ENCODE measurements at regions of chr13 and their contacts with region 1.

Region 1: DNA sequence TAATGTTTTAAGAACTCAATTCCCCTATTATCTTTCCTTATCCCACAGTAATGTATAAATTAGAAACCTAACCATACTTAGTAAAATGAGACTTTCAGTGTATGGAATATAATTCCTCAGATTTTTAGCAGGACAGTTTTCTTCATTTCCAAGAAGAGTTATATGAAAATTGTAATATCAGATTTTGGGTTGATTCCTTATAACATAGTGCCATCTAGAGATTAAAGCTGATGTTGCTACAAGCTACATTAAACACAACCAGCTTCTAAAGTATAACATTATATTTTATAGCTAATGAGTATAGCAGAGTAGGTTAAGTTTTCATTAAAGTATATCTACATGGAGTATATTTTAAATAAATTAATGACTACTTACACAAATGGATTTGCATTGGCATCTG is 99.7 kb upstream of the MIR17HG start:
- DNase-seq: no peak
- ATAC-seq: no peak
- H3K4me3 Mint-ChIP-seq: no peak overlapping the region
- H3K27ac Mint-ChIP-seq: no peak overlapping the region
- H3K4me1 Mint-ChIP-seq: peaks cover 12% of the 10 kb centered on the region
- H3K27me3 Mint-ChIP-seq: no peaks in the 10 kb centered on the region
- CTCF ChIP-seq: no peak

Region 2: DNA sequence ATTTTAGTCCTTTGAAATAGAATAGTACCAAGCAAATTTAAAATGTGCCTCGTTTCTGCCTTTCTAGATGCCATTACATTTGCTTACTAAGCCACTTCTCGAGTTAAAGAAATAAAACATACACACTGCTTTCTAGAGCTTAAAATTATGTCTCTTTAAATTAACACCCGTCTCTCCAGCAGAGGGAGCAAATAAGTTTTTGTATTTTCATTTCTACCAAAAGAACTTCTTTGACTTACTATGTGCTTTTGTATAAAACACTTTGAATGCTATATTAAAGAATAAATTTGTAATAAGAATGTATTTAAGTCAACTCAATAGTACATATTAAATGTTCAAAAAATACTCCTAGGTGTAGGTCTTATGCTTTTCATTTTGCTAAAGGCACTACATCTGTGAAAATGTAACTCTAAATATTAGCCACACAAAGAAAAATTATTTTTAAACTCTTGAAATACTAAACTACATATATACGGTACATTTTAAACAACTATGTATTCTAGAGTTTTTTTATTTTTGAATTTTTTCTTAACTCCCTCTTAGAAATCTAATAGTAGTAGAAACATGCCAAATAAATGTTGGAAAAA is 169.6 kb before region 1 on chr13:
- CTCF ChIA-PET with region 1: interaction called, 25 read pairs
- POLR2A ChIA-PET with region 1: no interaction called
- DNase-seq: no peak
- ATAC-seq: no peak
- H3K4me3 Mint-ChIP-seq: no peak overlapping the region
- H3K27ac Mint-ChIP-seq: no peak overlapping the region
- H3K4me1 Mint-ChIP-seq: peaks cover 10% of the 10 kb centered on the region
- H3K27me3 Mint-ChIP-seq: no peaks in the 10 kb centered on the region
- CTCF ChIP-seq: 0 out of 2 replicates have a peak, but pooled peaks have one; percentile 21

Region 3: DNA sequence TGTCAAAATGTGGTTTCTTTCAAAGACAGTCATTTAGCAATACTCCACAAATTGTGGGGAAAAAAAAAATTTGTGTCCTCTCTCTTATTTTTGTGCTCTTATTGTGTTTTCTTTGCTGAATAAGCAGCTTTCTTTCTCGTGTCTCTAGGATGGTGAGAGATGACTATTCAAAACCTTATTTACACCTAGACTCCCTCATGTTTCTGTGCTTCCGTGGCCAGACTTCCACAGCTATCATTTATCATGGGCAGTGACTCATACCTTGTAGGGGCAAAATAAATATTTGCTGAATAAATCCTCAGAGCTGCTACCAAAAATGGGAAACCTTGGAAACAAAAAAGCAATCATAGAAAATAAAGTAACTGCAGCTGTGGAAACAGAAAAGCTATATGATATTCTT is 105.2 kb before region 1 on chr13:
- CTCF ChIA-PET with region 1: no interaction called
- POLR2A ChIA-PET with region 1: no interaction called
- DNase-seq: no peak
- ATAC-seq: no peak
- H3K4me3 Mint-ChIP-seq: no peak overlapping the region
- H3K27ac Mint-ChIP-seq: no peak overlapping the region
- H3K4me1 Mint-ChIP-seq: peaks cover 38% of the 10 kb centered on the region
- H3K27me3 Mint-ChIP-seq: no peaks in the 10 kb centered on the region
- CTCF ChIP-seq: no peak

Region 4: DNA sequence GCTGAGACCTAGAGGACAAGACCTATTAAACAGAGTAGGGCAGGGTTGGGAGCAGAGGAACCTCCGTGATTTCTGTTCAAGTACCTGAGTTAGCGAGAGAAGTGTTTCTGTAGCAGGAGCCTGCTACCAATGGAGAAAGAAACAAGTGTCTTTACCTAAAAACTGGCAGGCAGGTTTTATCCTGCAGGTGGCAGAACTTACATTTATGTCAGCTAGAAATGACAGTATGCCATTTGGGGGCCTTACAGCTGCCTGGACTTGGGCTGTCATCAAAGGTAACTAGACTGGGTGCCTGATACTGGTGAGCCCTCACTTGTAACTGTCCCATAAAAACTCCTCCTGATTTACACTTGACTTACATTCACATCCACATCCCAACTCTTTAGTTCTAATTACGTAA is 85.6 kb before region 1 on chr13:
- CTCF ChIA-PET with region 1: interaction called, 28 read pairs
- POLR2A ChIA-PET with region 1: no interaction called
- DNase-seq: peak; percentile 23
- ATAC-seq: peak; percentile 86
- H3K4me3 Mint-ChIP-seq: no peak overlapping the region
- H3K27ac Mint-ChIP-seq: no peak overlapping the region
- H3K4me1 Mint-ChIP-seq: peaks cover 16% of the 10 kb centered on the region
- H3K27me3 Mint-ChIP-seq: 0 out of 2 replicates have a peak, but pooled peaks cover 3% of the 10 kb centered on the region
- CTCF ChIP-seq: no peak

Region 5: DNA sequence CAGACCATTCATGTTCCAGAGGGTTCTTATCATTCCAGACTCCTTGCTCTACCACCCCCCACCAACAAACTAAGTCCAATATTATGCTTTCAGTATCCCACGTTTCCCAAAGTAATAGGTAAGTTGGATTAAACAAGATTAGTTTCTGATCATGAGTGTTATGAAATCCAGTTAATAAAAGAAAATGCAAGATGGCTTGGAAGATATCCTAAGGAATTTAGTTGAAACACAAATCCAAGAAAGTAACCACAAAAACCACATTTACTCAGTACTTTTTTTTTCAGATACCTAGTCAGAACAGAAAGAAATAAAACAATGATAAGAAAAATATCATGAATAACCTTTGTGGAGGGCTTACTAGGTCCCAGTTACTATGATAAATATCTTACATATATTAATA is 19.7 kb before region 1 on chr13:
- CTCF ChIA-PET with region 1: no interaction called
- POLR2A ChIA-PET with region 1: no interaction called
- DNase-seq: no peak
- ATAC-seq: no peak
- H3K4me3 Mint-ChIP-seq: no peak overlapping the region
- H3K27ac Mint-ChIP-seq: no peak overlapping the region
- H3K4me1 Mint-ChIP-seq: peaks cover 3% of the 10 kb centered on the region; the same call in 1 of the 2 replicates
- H3K27me3 Mint-ChIP-seq: no peaks in the 10 kb centered on the region; the same call in 1 of the 2 replicates
- CTCF ChIP-seq: no peak

Region 6: GRCh38 chr13:91358387-91358782 is 110.6 kb after region 1 on chr13:
- CTCF ChIA-PET with region 1: no interaction called
- POLR2A ChIA-PET with region 1: no interaction called
- DNase-seq: no peak
- ATAC-seq: peak; percentile 2; the same call in 1 of the 2 replicates
- H3K4me3 Mint-ChIP-seq: no peak overlapping the region
- H3K27ac Mint-ChIP-seq: peak overlapping the region; percentile 82
- H3K4me1 Mint-ChIP-seq: peaks cover 17% of the 10 kb centered on the region
- H3K27me3 Mint-ChIP-seq: no peaks in the 10 kb centered on the region
- CTCF ChIP-seq: no peak

Measured in WTC11 (cell line).